Right ventricle myocardium inferior (tissue), 1 donor: ENCODE measurements at regions of chr7 and their contacts with region 1.

Region 1: DNA sequence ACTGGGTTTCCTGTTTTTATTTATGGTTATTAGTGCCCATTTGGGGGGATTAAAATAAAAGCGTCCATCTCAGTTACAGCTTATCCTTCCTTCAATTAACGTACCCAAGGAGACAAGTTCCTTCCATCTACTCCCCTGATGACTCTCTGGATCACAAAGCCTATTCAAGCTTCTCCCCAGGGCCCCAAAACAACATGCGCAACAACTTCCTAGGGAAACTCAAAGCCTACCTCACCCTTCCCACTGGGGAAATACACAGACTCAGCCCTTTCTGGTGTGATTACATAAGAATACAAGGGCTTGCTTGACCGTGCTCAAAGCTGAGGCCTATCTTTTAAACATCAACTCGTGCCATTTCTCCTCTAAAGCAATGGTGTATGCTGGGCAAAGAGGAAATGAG is 112.4 kb downstream of the CDK6 start:
- DNase-seq: no peak
- ATAC-seq: peak; percentile 77

Region 2: GRCh38 chr7:92781117-92781720 is 57.3 kb after region 1 on chr7:
- intact Hi-C with region 1: loop called (anchors 2 kb)
- DNase-seq: no peak
- ATAC-seq: peak; percentile 76

Region 3: GRCh38 chr7:93327006-93327633 is 603.2 kb after region 1 on chr7:
- intact Hi-C with region 1: no loop called
- DNase-seq: no peak
- ATAC-seq: no peak